GM13976 (cell line): ENCODE measurements at regions of chr11 and their contacts with region 1.

Region 1: GRCh38 chr11:5600374-5600851 is 4.0 kb downstream of the TRIM6 start:
- DNase-seq: peak; percentile 76
- CTCF ChIP-seq: peak; percentile 70

Region 2: GRCh38 chr11:5405173-5405572 is 195.2 kb before region 1 on chr11:
- in situ Hi-C with region 1: no loop called
- DNase-seq: no peak
- CTCF ChIP-seq: no peak

Region 3: DNA sequence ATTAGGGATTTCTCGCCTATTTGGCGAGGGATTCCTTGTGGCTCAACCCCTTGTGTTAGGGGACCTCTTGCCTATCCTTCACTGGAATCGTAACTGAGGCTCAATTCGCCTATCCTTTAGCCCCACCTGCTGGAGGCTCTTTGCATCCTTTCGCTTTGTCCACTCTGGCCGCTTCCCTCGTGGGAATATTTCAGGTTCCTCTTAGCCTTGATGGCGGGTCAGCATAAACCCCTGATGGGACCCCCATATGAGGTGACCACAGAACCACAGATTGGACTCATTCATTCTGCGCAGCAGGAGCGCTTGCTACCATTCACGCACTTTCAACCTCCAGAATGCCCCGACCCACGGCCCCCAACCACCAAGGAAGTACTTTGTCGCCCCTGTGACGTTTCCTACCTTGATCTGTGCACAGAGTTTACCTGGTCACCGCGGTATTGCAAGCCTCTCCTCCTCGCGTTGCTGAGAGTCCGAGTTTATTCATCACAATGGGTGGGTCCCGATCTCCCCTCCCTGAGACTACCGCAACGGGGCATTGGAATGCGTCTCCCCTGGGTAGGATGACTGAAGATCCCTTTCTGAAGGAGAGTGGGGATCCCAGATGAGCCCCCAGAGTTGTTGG is 208.2 kb after region 1 on chr11 and contains the start of gene OR52N2:
- in situ Hi-C with region 1: loop called (anchors 10 kb)
- DNase-seq: peak; percentile 26
- CTCF ChIP-seq: peak; percentile 83